Heart right ventricle (tissue), 16 donors: ENCODE measurements at regions of chr5 and their contacts with region 1.

Region 1: DNA sequence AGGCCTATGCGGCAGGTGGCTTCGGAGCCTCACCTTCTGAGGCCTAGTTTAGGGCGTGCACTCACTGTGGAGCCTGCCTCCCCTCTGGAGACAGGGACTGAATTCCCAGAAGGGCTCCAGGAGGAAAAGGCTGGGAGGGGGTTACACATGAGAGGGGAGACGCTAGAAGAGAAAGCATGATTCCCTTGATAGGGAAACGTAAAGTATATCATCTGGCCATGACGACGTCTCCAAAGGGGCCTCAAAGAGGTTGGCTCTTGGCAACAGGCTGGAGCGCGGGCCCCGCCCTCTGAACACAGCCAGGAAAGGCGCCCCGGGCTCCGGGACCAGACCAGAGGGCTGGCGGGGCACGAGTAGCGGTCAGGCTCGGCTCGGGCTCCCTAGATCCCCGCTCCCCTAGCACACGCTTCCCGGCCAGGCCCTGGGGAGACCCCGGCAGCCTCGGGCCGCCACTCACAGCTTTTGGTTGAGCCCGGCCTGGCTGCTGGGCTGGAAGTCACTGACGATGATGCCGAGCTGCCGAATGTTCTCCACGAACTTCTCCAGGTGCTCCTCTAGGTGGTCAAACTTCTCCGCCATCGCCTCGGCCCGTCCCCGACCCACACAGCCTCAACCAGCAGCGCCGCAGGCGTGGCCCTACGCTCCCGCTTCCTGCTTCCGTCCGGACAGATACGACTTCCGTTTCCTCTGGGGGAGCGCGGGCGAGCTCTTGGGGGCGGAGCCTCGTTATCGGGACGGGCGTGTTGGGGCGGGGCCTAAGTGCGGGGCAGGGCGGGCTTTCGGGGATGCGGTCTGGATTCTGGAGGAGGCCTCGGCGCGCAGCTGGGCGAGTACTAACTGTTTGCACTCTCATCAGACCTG is at the start of gene MED10:
- DNase-seq: peak; percentile 96 to 97
- ATAC-seq: peak; percentile 99 to 100 (median 100)
- H3K4me3 ChIP-seq: peak within 1 kb of the TSS; percentile 74 to 99 (median 92)
- H3K27ac ChIP-seq: peak within 1 kb of the TSS; percentile 44 to 96 (median 90)
- H3K4me1 ChIP-seq: peaks cover 5 to 33% (median 20%) of the 10 kb centered on the region in 9 donors
- H3K27me3 ChIP-seq: peaks cover 0 to 1% (median 0%) of the 10 kb centered on the region in 7 donors
- CTCF ChIP-seq: no peak
- total RNA-seq, gene MED10: 15.3 to 29.5 (median 22.4) TPM

Region 2: GRCh38 chr5:6311568-6312501 is 66.3 kb before region 1 on chr5:
- intact Hi-C with region 1: loop called in 2 of 10 experiments (anchors 2 kb)
- DNase-seq: peak; percentile 17 to 69
- ATAC-seq: peak; percentile 86 to 99 (median 96)
- H3K4me3 ChIP-seq: no peak overlapping the region
- H3K27ac ChIP-seq: peak overlapping the region in 6 of 10 donors; percentile 12 to 78 (median 68)
- H3K4me1 ChIP-seq: peaks cover 0 to 8% (median 0%) of the 10 kb centered on the region in 9 donors
- H3K27me3 ChIP-seq: no peaks in the 10 kb centered on the region
- CTCF ChIP-seq: no peak

Region 3: DNA sequence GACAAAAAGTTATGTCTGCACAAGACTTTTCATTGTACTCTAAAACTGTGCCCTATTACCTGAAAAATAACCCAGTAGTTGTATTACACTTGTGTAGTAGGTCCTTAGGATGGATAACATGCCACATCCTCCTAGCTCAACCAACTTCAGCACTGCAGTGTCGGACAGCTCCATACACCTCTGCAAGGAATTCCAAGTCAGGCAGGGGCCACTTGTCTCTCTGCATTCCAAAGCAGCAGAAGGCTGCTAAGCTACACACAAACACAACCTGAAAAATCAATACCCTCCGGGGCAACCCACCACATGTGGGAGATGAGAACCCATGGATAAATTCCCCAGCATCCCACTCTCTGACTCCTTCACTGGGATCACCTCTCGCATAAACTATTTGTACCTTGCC is 50.0 kb before region 1 on chr5:
- intact Hi-C with region 1: no loop called
- DNase-seq: peak; percentile 15 to 16
- ATAC-seq: no peak
- H3K4me3 ChIP-seq: no peak overlapping the region
- H3K27ac ChIP-seq: no peak overlapping the region
- H3K4me1 ChIP-seq: no peaks in the 10 kb centered on the region
- H3K27me3 ChIP-seq: no peaks in the 10 kb centered on the region
- CTCF ChIP-seq: no peak

Region 4: DNA sequence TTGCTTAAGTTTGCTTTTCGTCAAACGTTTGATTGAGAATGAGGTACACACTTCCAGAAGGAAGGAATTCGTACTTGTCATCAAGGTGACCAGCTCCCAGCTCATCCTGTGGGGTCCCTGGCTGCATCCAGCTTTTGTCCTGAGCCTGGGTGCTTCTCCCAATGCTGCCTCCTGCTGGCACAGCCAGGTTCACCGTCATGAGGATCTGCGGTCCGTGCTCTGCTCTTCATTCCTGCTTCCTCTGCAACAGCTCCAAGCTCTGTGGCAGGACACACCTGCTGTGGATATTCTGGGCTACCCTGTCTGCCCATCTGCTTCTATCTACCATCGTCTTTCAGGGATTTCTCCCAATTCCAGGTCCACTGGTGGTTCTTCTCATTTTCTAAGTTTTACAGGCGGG is 57.2 kb after region 1 on chr5:
- intact Hi-C with region 1: loop called in 2 of 10 experiments (anchors 2 to 10 kb)
- DNase-seq: no peak
- ATAC-seq: no peak
- H3K4me3 ChIP-seq: no peak overlapping the region
- H3K27ac ChIP-seq: no peak overlapping the region
- H3K4me1 ChIP-seq: peaks cover 0 to 21% (median 6%) of the 10 kb centered on the region in 9 donors
- H3K27me3 ChIP-seq: peaks cover 0 to 15% (median 0%) of the 10 kb centered on the region in 7 donors
- CTCF ChIP-seq: peak in 7 of 9 donors; percentile 20 to 46 (median 34)

Region 5: GRCh38 chr5:6448622-6449464 is 70.7 kb after region 1 on chr5 and contains the start of gene UBE2QL1:
- intact Hi-C with region 1: loop called in 3 of 10 experiments (anchors 5 to 10 kb)
- DNase-seq: peak in 1 of 2 donors; percentile 31
- ATAC-seq: peak; percentile 31 to 70 (median 54)
- H3K4me3 ChIP-seq: peak within 1 kb of the TSS; percentile 51 to 74 (median 68)
- H3K27ac ChIP-seq: peak within 1 kb of the TSS in 8 of 10 donors; percentile 42 to 93 (median 56)
- H3K4me1 ChIP-seq: peaks cover 0 to 22% (median 14%) of the 10 kb centered on the region in 9 donors
- H3K27me3 ChIP-seq: peaks cover 0 to 42% (median 24%) of the 10 kb centered on the region in 7 donors
- CTCF ChIP-seq: no peak
- total RNA-seq, gene UBE2QL1: 13.0 to 26.3 (median 18.6) TPM

Region 6: GRCh38 chr5:6632917-6633468 is 254.9 kb after region 1 on chr5 and contains the starts of genes NSUN2 and SRD5A1:
- intact Hi-C with region 1: loop called in 1 of 10 experiments (anchors 5 kb)
- DNase-seq: peak; percentile 90 to 92
- ATAC-seq: peak; percentile 97 to 99 (median 98)
- H3K4me3 ChIP-seq: peak within 1 kb of the TSS; percentile 50 to 100 (median 96)
- H3K27ac ChIP-seq: peak within 1 kb of the TSS; percentile 96 to 99 (median 97)
- H3K4me1 ChIP-seq: peaks cover 6 to 45% (median 30%) of the 10 kb centered on the region in 9 donors
- H3K27me3 ChIP-seq: no peaks in the 10 kb centered on the region
- CTCF ChIP-seq: no peak
- total RNA-seq, gene NSUN2: 30.0 to 42.6 (median 36.1) TPM
- total RNA-seq, gene SRD5A1: 2.1 to 5.5 (median 3.2) TPM

Region 7: DNA sequence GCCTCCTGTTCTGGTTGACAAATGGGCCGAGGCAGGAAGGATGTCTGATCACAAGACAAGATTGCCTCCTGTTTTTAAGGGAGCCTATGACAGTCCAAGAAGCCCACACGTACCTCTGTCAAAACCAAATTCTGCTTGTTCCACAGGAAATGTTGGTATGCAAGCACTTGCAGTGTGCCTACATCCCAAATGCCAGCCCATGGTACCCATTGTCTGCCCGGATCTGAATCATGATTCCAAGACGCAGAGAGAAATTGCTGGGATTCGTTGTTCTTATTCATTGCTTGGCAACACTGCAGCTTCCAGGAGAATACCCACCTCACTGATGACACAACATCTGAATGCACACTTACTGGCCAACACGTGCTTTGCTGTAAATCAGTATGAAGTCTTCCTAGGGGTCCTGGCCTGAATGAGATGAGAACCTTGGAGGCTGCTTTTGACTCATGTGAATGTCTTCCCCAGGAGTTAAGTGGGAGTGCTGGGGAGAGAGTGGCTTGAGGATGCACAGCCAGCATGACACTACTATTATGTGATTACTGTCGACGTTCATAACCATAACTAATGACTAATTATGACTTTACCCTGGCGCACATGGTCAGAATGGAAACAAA is 266.6 kb after region 1 on chr5:
- intact Hi-C with region 1: no loop called
- DNase-seq: no peak
- ATAC-seq: no peak
- H3K4me3 ChIP-seq: no peak overlapping the region
- H3K27ac ChIP-seq: no peak overlapping the region
- H3K4me1 ChIP-seq: peaks cover 0 to 4% (median 0%) of the 10 kb centered on the region in 9 donors
- H3K27me3 ChIP-seq: no peaks in the 10 kb centered on the region
- CTCF ChIP-seq: no peak

Region 8: DNA sequence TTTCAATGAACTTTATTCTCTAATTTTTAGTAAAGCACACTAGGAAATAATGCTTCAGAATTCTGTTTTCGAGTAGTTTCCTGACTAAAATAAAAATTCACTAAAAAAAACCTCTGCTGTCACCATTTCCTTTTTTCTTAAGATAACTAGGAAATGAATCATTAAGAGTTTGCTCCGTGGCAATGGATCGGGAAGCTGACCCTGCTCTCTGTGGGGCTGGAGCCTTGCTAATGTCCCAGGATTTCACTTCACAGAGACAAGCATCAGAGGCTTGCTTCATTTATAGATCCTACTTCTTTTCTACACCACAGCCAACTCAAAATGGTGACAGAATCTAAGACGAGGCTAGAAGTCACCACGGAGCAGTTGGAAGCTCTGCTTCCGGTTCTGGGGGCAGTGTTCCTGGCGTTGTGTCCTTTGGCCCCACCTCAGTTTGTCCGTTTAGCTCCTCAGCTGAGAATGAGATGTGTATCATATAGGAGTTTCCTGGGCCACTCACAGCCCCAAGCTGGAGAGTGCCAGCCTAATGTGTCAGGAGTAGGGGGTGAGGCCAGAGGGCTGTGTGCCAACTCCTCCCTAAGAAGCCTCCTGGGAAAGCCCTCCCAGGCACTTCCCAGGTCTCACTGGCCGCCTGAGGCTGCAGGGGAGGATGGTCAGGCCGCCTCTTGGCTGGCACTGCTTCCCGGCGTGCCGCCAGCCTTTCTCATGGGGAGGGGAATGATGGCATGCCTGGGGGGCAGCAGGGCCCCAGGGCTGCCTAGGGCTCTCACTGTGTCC is 354.7 kb after region 1 on chr5:
- intact Hi-C with region 1: loop called in 1 of 10 experiments (anchors 10 kb)
- DNase-seq: peak; percentile 37 to 53
- ATAC-seq: peak; percentile 39 to 84 (median 65)
- H3K4me3 ChIP-seq: peak overlapping the region in 6 of 10 donors; percentile 12 to 30 (median 16)
- H3K27ac ChIP-seq: peak overlapping the region in 9 of 10 donors; percentile 55 to 86 (median 72)
- H3K4me1 ChIP-seq: peaks cover 12 to 93% (median 70%) of the 10 kb centered on the region in 9 donors
- H3K27me3 ChIP-seq: no peaks in the 10 kb centered on the region
- CTCF ChIP-seq: no peak

Region 9: GRCh38 chr5:6745706-6746222 is 367.6 kb after region 1 on chr5:
- intact Hi-C with region 1: loop called in 1 of 10 experiments (anchors 10 kb)
- DNase-seq: no peak
- ATAC-seq: peak; percentile 41 to 82 (median 64)
- H3K4me3 ChIP-seq: no peak overlapping the region
- H3K27ac ChIP-seq: peak overlapping the region in 3 of 10 donors; percentile 45 to 58 (median 49)
- H3K4me1 ChIP-seq: peaks cover 0 to 14% (median 8%) of the 10 kb centered on the region in 9 donors
- H3K27me3 ChIP-seq: no peaks in the 10 kb centered on the region
- CTCF ChIP-seq: peak; percentile 69 to 85 (median 81)

Region 10: DNA sequence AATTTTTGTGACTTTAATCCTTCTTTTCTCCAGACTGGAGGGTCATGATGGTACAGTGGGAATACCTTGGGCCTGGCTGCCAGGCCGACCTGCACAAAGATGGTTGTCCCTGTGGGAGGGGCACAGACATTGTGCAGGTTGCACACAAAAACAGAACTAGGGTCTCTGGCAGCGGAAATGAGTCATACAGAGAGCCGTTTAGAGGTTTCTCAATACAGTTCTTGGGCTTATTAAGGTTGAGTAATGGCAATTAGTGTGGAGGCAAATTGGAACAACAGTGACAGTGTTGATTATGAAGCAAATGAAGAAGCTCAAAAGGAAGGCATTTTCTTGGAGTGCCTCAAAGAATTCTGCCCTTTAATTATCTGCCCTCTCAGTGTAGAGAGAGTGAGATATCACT is 508.7 kb after region 1 on chr5:
- intact Hi-C with region 1: no loop called
- DNase-seq: no peak
- ATAC-seq: no peak
- H3K4me3 ChIP-seq: no peak overlapping the region
- H3K27ac ChIP-seq: no peak overlapping the region
- H3K4me1 ChIP-seq: no peaks in the 10 kb centered on the region
- H3K27me3 ChIP-seq: no peaks in the 10 kb centered on the region
- CTCF ChIP-seq: no peak

Region 11: GRCh38 chr5:7157083-7157482 is 778.9 kb after region 1 on chr5:
- intact Hi-C with region 1: no loop called
- DNase-seq: no peak
- ATAC-seq: no peak
- H3K4me3 ChIP-seq: no peak overlapping the region
- H3K27ac ChIP-seq: no peak overlapping the region
- H3K4me1 ChIP-seq: no peaks in the 10 kb centered on the region
- H3K27me3 ChIP-seq: no peaks in the 10 kb centered on the region
- CTCF ChIP-seq: no peak